Heart right ventricle (tissue), 16 donors: ENCODE measurements at regions of chr12 and their contacts with region 1.

Region 1: GRCh38 chr12:68686595-68687521 is at the start of gene NUP107:
- DNase-seq: peak; percentile 98 to 99
- ATAC-seq: peak; percentile 98 to 100 (median 99)
- H3K4me3 ChIP-seq: peak within 1 kb of the TSS; percentile 63 to 96 (median 83)
- H3K27ac ChIP-seq: peak within 1 kb of the TSS; percentile 10 to 86 (median 78)
- H3K4me1 ChIP-seq: peaks cover 0 to 28% (median 13%) of the 10 kb centered on the region in 9 donors
- H3K27me3 ChIP-seq: no peaks in the 10 kb centered on the region
- CTCF ChIP-seq: peak in 6 of 9 donors; percentile 8 to 30 (median 19)
- total RNA-seq, gene NUP107: 21.0 to 25.7 (median 22.2) TPM

Region 2: DNA sequence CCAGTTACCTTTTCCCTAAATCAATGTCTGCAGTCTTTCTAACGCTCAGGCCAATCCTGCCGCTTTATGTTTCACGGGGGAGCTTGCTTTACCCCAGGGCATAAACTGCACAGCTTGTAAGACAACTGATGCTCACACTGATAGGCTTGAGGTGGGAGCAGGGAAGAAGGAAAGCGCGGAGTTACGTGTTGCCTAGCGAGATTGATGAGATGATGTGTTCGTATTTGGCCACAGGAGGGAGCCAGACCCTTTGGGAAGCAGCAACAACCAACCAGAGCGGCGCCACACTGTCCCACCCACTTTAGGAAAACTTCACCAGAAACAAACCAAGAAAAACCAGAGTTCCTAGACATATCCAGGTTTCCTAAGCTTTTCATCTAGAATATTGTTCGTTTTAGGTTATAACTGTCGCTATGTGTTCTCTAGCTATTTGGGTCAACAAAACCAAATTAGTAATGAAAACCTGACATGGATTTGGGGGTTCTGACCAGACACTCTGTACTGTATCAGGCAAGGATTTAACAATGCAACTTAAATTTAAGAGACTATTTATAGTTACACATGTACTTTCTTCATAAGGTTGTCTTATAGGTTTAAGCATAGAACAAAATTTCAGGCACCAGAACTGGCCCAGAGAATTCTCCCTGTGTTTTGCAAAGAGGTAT is 463.6 kb before region 1 on chr12:
- intact Hi-C with region 1: loop called in 2 of 10 experiments (anchors 10 kb)
- DNase-seq: peak; percentile 55 to 81
- ATAC-seq: peak; percentile 91 to 99 (median 98)
- H3K4me3 ChIP-seq: peak overlapping the region in 1 of 10 donors; percentile 13
- H3K27ac ChIP-seq: peak overlapping the region in 1 of 10 donors; percentile 15
- H3K4me1 ChIP-seq: peaks cover 0 to 18% (median 3%) of the 10 kb centered on the region in 9 donors
- H3K27me3 ChIP-seq: peaks cover 0 to 11% (median 0%) of the 10 kb centered on the region in 7 donors
- CTCF ChIP-seq: peak; percentile 73 to 90 (median 85)

Region 3: GRCh38 chr12:68358532-68359485 is 328.0 kb before region 1 on chr12:
- intact Hi-C with region 1: loop called in 9 of 10 experiments (anchors 2 to 10 kb)
- DNase-seq: peak in 1 of 2 donors; percentile 79
- ATAC-seq: peak; percentile 65 to 92 (median 87)
- H3K4me3 ChIP-seq: no peak overlapping the region
- H3K27ac ChIP-seq: peak overlapping the region in 1 of 10 donors; percentile 64
- H3K4me1 ChIP-seq: peaks cover 0 to 31% (median 13%) of the 10 kb centered on the region in 9 donors
- H3K27me3 ChIP-seq: no peaks in the 10 kb centered on the region
- CTCF ChIP-seq: peak; percentile 56 to 78 (median 74)

Region 4: GRCh38 chr12:68406134-68406594 is 280.7 kb before region 1 on chr12:
- intact Hi-C with region 1: loop called in 2 of 10 experiments (anchors 5 kb)
- DNase-seq: peak; percentile 93 to 95
- ATAC-seq: peak; percentile 96 to 99 (median 98)
- H3K4me3 ChIP-seq: peak overlapping the region in 1 of 10 donors; percentile 25
- H3K27ac ChIP-seq: peak overlapping the region in 9 of 10 donors; percentile 63 to 84 (median 70)
- H3K4me1 ChIP-seq: peaks cover 6 to 36% (median 28%) of the 10 kb centered on the region in 9 donors
- H3K27me3 ChIP-seq: no peaks in the 10 kb centered on the region
- CTCF ChIP-seq: peak in 8 of 9 donors; percentile 14 to 62 (median 48)

Region 5: GRCh38 chr12:68807576-68808387 is 120.9 kb after region 1 on chr12 and contains the start of gene MDM2:
- intact Hi-C with region 1: loop called in 1 of 10 experiments (anchors 5 kb)
- DNase-seq: peak; percentile 93 to 97
- ATAC-seq: peak; percentile 96 to 99 (median 96)
- H3K4me3 ChIP-seq: peak within 1 kb of the TSS; percentile 78 to 98 (median 92)
- H3K27ac ChIP-seq: peak within 1 kb of the TSS; percentile 95 to 100 (median 99)
- H3K4me1 ChIP-seq: peaks cover 3 to 47% (median 26%) of the 10 kb centered on the region in 9 donors
- H3K27me3 ChIP-seq: no peaks in the 10 kb centered on the region
- CTCF ChIP-seq: peak; percentile 79 to 97 (median 90)
- total RNA-seq, gene MDM2: 40.1 to 59.1 (median 47.1) TPM